ENCODE measurements at regions of chr3 and their contacts with region 1.

Region 1: DNA sequence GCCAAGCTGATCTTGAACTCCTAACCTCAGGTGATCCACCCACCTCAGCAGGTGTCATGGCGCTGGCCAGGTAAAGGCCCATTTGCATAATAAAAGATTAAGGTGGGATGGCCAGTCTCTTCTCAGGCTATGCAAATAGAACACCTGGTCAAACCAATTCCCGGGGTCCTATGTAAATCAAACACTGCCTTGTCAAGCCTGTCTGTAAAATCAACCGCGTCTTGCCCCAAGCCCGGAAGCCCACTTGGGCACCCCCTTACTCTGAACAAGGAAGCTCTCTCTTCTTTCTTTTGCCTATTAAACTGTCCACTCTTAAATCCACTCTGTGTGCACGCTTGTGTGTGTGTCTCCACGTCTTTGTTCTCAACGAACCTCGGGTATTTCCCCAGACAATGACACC is 13.0 kb upstream of the POC1A start:
- DNase-seq: no peak
- H3K4me3 ChIP-seq: no peak overlapping the region
- H3K4me3 Mint-ChIP-seq: no peak overlapping the region
- H3K27ac ChIP-seq: no peak overlapping the region
- H3K27ac Mint-ChIP-seq: no peak overlapping the region
- H3K4me1 ChIP-seq: no peaks in the 10 kb centered on the region
- H3K4me1 Mint-ChIP-seq: peaks cover 12% of the 10 kb centered on the region
- H3K27me3 ChIP-seq: no peaks in the 10 kb centered on the region
- H3K27me3 Mint-ChIP-seq: peaks cover 0 to 2% (median 1%) of the 10 kb centered on the region in 3 donors
- CTCF ChIP-seq: no peak

Region 2: GRCh38 chr3:52216585-52217408 is 49.6 kb after region 1 on chr3:
- intact Hi-C with region 1: loop called in 1 of 2 experiments (anchors 5 kb)
- DNase-seq: peak in 1 of 3 donors; percentile 46
- H3K4me3 ChIP-seq: peak overlapping the region in 1 of 3 experiments; percentile 7
- H3K4me3 Mint-ChIP-seq: peak overlapping the region in 1 of 2 donors; percentile 24
- H3K27ac ChIP-seq: no peak overlapping the region
- H3K27ac Mint-ChIP-seq: peak overlapping the region in 6 of 7 donors; percentile 6 to 85 (median 40)
- H3K4me1 ChIP-seq: peaks cover 30 to 33% of the 10 kb centered on the region in 2 donors
- H3K4me1 Mint-ChIP-seq: peaks cover 46% of the 10 kb centered on the region
- H3K27me3 ChIP-seq: no peaks in the 10 kb centered on the region
- H3K27me3 Mint-ChIP-seq: peaks cover 0 to 3% (median 0%) of the 10 kb centered on the region in 3 donors
- CTCF ChIP-seq: no peak

Measured in CD14-positive monocyte (primary cell).